Activated CD4-positive, alpha-beta T cell treated with anti-CD3 and anti-CD28 coated beads for 36 hours (primary cell): ENCODE measurements at regions of chr1 and their contacts with region 1.

Region 1: DNA sequence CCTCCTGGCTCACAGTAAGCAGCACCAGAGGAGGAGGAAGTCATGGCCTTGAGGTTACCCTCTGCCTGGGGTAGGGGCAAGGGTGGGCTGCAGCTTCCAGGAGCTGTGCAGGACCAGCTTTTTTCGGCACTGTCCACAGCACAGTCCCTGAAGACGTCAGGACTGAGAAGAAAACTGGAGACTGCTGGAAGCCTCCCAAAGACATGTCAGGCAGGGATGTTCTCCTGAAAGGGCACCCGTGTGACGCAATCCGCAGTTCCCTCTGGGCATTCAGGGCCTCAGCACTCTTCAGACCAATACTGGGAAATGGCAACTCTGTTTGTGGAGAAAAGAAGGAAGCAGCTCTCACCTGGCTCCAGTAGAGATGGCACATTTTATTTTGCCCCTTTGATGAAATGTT is 64.8 kb upstream of the TENT5C start:
- DNase-seq: no peak
- ATAC-seq: no peak
- H3K4me3 Mint-ChIP-seq: no peak overlapping the region
- H3K27ac Mint-ChIP-seq: peak overlapping the region; percentile 42
- H3K4me1 Mint-ChIP-seq: peaks cover 20% of the 10 kb centered on the region
- H3K27me3 Mint-ChIP-seq: no peaks in the 10 kb centered on the region

Region 2: DNA sequence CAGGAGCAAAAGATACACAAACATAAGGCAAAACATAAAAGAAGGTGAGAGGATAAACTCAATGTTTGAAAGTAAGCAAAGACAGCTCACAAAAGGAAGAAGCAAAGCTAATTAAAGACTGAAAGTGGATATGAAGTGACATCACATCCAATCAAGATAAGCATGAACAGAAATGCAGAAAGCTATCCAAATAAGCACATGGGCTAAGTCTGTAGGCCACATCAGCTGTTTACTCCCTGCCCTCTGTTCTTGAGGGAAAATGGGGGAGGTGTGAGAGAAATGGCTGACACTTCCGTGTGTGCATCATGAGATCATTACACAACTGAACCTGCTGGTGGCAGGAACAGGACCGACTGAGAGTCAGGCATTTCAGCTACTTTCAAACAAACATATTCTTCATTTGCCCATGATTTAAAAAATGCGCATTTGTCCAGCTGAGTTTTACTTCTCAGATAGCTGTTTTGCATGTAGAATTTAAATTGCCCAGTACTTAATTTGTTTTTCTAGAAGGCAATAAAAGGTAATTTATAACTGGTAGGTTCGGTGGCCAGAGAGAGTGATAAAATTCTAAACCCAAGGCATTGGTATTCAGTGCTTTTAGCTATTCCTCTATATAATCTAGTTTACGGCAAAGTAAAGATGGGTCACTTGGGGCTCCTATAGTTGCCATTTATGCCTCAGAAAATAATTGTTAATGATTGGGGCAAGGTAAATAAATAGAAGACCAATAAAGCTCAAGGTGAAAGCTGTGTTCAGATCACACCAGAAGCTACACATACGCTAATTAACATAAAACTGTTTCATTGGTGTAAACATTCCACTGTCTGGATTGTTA is 200.9 kb before region 1 on chr1:
- CTCF ChIA-PET with region 1: no interaction called
- POLR2A ChIA-PET with region 1: no interaction called
- intact Hi-C with region 1: no loop called
- DNase-seq: peak; percentile 34
- ATAC-seq: peak; percentile 74
- H3K4me3 Mint-ChIP-seq: no peak overlapping the region
- H3K27ac Mint-ChIP-seq: no peak overlapping the region
- H3K4me1 Mint-ChIP-seq: peaks cover 16% of the 10 kb centered on the region
- H3K27me3 Mint-ChIP-seq: no peaks in the 10 kb centered on the region

Region 3: GRCh38 chr1:117562581-117563520 is 21.8 kb after region 1 on chr1:
- CTCF ChIA-PET with region 1: no interaction called
- POLR2A ChIA-PET with region 1: interaction called, 13 read pairs
- intact Hi-C with region 1: no loop called
- DNase-seq: no peak
- ATAC-seq: no peak
- H3K4me3 Mint-ChIP-seq: no peak overlapping the region
- H3K27ac Mint-ChIP-seq: no peak overlapping the region
- H3K4me1 Mint-ChIP-seq: no peaks in the 10 kb centered on the region
- H3K27me3 Mint-ChIP-seq: peaks cover 2% of the 10 kb centered on the region